ENCODE measurements at regions of chr14 and their contacts with region 1.

Region 1: GRCh38 chr14:104657101-104657524 is 32.3 kb upstream of the INF2 start:
- DNase-seq: peak; percentile 68
- ATAC-seq: peak; percentile 60
- H3K4me3 Mint-ChIP-seq: peak overlapping the region; percentile 79
- H3K27ac Mint-ChIP-seq: peak overlapping the region; percentile 98
- H3K4me1 Mint-ChIP-seq: peaks cover 85% of the 10 kb centered on the region
- H3K27me3 Mint-ChIP-seq: no peaks in the 10 kb centered on the region
- CTCF ChIP-seq: no peak

Region 2: DNA sequence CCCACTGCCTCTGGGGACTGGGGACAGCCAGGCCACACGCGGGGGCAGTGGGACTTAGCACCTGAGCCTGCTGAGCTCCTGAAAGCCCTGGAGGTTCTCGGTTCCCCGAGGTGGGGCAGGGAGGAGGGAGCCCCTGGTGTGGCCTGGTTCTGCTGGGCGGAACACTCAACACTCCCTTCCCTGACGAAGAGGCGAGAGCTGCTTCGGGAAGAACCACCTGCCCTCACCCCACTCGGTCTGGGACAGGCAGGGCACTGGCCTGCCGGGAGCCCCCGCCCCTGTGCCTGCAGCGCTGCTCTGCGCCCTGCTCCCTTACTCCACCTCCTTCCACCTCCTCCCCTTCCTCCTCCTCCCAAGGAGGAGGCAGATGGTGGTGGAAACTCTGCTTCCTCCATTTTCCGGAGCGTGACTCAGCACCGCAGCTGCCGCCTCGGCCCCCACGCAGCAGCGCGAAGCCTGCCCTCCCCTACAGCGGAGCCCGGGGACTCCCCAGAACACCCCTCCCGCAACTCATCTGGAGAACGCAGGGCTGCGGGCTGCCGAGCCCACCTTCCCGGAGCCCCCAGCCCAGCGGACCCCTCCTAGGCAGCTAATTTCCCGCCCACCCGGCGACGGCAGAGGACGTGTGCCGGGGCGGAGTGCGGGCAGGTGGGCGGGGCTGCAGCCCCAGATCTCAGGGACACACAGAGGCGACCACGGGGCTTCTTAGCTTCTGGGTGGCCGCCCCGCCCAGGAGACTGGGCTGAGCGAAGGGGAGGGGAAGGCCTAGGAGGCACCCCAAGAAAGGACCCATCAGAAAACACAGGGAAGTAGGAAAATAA is 20.6 kb after region 1 on chr14:
- CTCF ChIA-PET with region 1: interaction called, 13 read pairs
- POLR2A ChIA-PET with region 1: interaction called, 182 read pairs
- intact Hi-C with region 1: loop called (anchors 1 kb)
- DNase-seq: peak; percentile 69
- ATAC-seq: peak; percentile 63
- H3K4me3 Mint-ChIP-seq: peak overlapping the region; percentile 81
- H3K27ac Mint-ChIP-seq: peak overlapping the region; percentile 80
- H3K4me1 Mint-ChIP-seq: peaks cover 52% of the 10 kb centered on the region
- H3K27me3 Mint-ChIP-seq: no peaks in the 10 kb centered on the region
- CTCF ChIP-seq: no peak

Region 3: DNA sequence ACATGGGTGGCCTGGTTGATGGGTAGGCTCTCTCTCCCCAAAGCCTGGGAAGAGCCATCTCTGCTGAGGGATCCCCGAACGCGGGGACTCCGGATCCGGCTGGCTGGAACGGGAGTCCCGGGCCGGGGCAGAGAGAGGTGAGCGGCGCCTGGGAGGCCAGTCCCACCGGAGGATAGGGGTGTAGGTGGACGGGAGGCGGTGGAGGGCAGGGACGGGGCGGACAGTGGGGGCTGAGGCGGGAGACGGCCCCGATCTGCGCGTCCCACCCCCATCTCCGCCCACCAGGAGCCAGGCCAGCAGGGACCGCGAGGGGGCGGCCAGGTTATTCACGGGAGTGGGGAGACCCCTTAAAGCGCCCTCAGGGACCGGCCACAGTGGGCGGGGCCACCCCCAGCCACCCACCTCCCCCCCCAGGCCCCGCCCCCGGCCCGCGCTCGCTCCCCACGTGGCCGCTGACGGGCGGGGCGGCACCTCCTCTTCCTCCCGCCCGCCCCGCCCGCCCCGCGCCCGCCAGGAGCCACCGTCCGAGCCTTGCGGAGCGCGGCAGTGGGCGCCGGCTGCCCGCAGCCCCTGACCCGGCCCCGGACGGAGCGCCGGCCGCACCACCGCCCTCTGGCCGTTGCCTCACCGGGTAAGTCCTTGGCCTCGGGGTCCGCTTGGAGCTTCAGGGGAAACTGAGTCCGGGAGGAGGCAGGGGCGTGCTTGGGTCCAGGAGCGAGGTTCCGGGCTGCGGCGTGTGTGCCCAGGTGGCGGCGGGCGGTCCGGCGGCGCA is 32.2 kb after region 1 on chr14 and contains the start of gene INF2:
- CTCF ChIA-PET with region 1: interaction called, 4 read pairs
- POLR2A ChIA-PET with region 1: interaction called, 19 read pairs
- intact Hi-C with region 1: loop called (anchors 1 kb)
- DNase-seq: peak; percentile 63
- ATAC-seq: peak; percentile 78
- H3K4me3 Mint-ChIP-seq: peak within 1 kb of the TSS; percentile 72
- H3K27ac Mint-ChIP-seq: no peak within 1 kb of the TSS
- H3K4me1 Mint-ChIP-seq: peaks cover 68% of the 10 kb centered on the region
- H3K27me3 Mint-ChIP-seq: no peaks in the 10 kb centered on the region
- CTCF ChIP-seq: no peak
- total RNA-seq, gene INF2: 38.6 and 47.2 TPM in 2 replicates

Region 4: DNA sequence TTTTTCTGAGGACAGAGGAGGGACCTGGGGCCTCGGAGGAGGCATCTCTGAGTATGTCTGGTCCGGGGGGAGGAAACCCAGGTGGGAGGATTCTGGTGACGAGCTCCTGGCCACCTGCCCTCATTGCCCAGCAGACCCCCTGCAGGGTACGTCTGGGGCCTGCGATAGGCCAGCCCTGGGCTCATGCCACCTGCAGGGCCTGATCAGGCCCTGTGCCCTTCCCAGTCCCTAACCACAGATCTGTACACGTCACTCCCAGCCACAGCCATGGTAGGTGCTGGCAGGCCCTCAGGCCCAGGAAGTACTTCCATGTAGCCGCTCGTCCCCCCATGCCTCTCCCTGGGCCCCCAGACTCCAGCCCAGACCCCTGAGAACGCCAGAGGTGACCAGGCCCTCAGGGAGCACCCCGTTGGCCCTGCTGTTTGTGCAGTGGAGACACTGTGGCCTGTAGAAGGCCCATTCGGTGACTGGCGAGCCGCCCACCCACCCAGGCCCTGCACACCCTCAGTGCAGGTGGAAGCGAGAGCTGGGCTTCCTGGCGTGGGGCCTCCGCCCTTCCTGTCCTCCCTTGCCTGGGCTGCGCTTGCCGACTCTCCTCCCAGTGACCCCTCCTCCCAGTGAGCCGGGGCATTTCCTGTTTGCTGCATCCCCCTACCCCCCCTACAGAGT is 38.0 kb after region 1 on chr14:
- CTCF ChIA-PET with region 1: interaction called, 3 read pairs
- POLR2A ChIA-PET with region 1: interaction called, 11 read pairs
- intact Hi-C with region 1: no loop called
- DNase-seq: no peak
- ATAC-seq: peak; percentile 72
- H3K4me3 Mint-ChIP-seq: no peak overlapping the region
- H3K27ac Mint-ChIP-seq: peak overlapping the region; percentile 63
- H3K4me1 Mint-ChIP-seq: peaks cover 44% of the 10 kb centered on the region
- H3K27me3 Mint-ChIP-seq: no peaks in the 10 kb centered on the region
- CTCF ChIP-seq: no peak